Activated CD4-positive, alpha-beta memory T cell treated with anti-CD3 and anti-CD28 coated beads for 36 hours (primary cell): ENCODE measurements at regions of chr4 and their contacts with region 1.

Region 1: GRCh38 chr4:53365486-53366300 is at the start of gene SCFD2:
- DNase-seq: peak; percentile 99
- H3K4me3 Mint-ChIP-seq: peak within 1 kb of the TSS; percentile 96
- H3K27ac Mint-ChIP-seq: peak within 1 kb of the TSS; percentile 94
- H3K4me1 Mint-ChIP-seq: peaks cover 39% of the 10 kb centered on the region
- H3K27me3 Mint-ChIP-seq: peaks cover 5% of the 10 kb centered on the region
- total RNA-seq, gene SCFD2: 18.8 to 19.9 TPM

Region 2: DNA sequence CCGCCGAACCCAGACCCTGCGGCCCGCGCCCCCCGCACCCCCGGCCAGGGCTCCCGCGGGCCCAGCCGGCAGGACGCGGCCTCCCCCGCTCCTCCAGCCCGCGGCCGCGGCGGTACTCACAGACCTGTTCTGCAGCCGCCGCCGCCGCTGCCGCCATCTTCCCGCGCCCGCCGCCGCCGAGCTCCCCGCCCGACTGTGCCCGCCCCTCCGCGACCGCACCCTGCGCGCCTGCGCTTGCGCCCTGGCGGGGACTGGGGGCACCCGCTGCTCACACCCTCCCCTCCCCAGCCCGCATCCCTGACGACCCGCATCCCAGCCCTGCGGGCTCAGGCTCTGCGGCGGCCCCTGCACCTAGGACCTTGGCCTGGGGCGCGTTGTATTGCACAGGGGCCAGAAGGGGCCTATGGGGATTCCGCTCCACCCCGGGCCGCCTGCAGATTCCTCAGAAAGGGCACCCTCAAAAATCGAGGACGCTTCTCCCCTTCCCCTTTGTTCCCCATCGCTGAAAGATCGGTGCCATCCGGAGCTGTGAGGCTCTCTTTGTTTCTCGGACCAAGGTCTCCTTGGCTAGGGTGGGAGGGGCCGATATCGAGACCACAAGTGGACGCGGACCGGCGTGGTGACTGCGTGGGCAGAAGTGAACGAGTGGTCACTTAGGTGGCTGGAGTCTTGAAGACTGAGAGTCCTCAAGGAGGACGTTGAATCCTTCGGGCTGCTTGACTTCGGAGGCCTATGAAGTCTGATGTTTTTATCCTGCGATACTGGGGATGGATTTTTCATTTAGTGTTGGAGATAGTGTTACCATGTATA is 1327.4 kb before region 1 on chr4 and contains the start of gene SGCB:
- CTCF ChIA-PET with region 1: no interaction called
- POLR2A ChIA-PET with region 1: no interaction called
- intact Hi-C with region 1: loop called (anchors 10 kb)
- DNase-seq: peak; percentile 78
- H3K4me3 Mint-ChIP-seq: peak within 1 kb of the TSS; percentile 81
- H3K27ac Mint-ChIP-seq: no peak within 1 kb of the TSS
- H3K4me1 Mint-ChIP-seq: peaks cover 25% of the 10 kb centered on the region
- H3K27me3 Mint-ChIP-seq: peaks cover 11% of the 10 kb centered on the region
- total RNA-seq, gene SGCB: 13.9 to 14.3 TPM

Region 3: GRCh38 chr4:52799813-52800212 is 565.9 kb before region 1 on chr4:
- CTCF ChIA-PET with region 1: no interaction called
- POLR2A ChIA-PET with region 1: no interaction called
- intact Hi-C with region 1: no loop called
- DNase-seq: no peak
- H3K4me3 Mint-ChIP-seq: no peak overlapping the region
- H3K27ac Mint-ChIP-seq: no peak overlapping the region
- H3K4me1 Mint-ChIP-seq: no peaks in the 10 kb centered on the region
- H3K27me3 Mint-ChIP-seq: peaks cover 16% of the 10 kb centered on the region

Region 4: DNA sequence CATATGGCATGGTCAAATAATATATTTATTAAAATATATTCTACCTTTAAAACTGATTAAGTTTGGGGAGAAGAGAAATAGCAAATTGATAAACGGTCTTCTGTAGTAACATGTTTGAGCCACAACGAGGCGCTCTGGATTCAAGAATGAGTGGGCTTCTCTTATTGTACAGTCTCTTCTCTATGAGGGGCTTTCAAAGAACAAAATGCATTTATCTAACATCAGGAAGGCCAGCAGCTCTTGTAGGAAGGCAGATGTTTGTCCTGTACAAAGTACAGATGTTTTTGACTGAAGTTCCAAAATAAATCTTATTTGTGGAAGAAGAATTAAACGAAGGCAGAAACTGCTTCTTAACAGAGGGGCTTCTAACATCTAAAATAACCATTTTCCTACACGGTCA is 350.0 kb before region 1 on chr4:
- CTCF ChIA-PET with region 1: no interaction called
- POLR2A ChIA-PET with region 1: no interaction called
- intact Hi-C with region 1: loop called (anchors 10 kb)
- DNase-seq: peak; percentile 21
- H3K4me3 Mint-ChIP-seq: no peak overlapping the region
- H3K27ac Mint-ChIP-seq: no peak overlapping the region
- H3K4me1 Mint-ChIP-seq: peaks cover 22% of the 10 kb centered on the region
- H3K27me3 Mint-ChIP-seq: no peaks in the 10 kb centered on the region

Region 5: DNA sequence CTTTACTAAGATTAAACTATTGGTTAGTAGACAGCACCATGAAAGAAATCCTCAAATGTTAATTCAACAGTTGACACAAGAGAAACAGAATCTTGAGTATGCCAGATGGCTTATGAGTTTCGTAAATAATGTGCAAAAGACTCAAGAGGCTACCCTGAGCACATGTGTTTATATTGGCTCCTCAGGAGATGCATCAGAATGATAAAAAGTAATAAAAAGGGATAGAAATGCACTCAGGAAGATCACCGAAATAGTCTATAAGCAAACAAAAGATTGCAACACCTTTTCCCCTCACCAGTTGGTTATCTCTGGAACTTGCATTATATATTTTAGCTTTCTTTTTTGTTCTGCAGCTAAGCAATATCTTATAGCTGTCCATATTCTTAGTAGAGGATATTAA is 84.3 kb before region 1 on chr4:
- CTCF ChIA-PET with region 1: no interaction called
- POLR2A ChIA-PET with region 1: no interaction called
- intact Hi-C with region 1: no loop called
- DNase-seq: no peak
- H3K4me3 Mint-ChIP-seq: no peak overlapping the region
- H3K27ac Mint-ChIP-seq: no peak overlapping the region
- H3K4me1 Mint-ChIP-seq: peaks cover 3% of the 10 kb centered on the region
- H3K27me3 Mint-ChIP-seq: no peaks in the 10 kb centered on the region

Region 6: DNA sequence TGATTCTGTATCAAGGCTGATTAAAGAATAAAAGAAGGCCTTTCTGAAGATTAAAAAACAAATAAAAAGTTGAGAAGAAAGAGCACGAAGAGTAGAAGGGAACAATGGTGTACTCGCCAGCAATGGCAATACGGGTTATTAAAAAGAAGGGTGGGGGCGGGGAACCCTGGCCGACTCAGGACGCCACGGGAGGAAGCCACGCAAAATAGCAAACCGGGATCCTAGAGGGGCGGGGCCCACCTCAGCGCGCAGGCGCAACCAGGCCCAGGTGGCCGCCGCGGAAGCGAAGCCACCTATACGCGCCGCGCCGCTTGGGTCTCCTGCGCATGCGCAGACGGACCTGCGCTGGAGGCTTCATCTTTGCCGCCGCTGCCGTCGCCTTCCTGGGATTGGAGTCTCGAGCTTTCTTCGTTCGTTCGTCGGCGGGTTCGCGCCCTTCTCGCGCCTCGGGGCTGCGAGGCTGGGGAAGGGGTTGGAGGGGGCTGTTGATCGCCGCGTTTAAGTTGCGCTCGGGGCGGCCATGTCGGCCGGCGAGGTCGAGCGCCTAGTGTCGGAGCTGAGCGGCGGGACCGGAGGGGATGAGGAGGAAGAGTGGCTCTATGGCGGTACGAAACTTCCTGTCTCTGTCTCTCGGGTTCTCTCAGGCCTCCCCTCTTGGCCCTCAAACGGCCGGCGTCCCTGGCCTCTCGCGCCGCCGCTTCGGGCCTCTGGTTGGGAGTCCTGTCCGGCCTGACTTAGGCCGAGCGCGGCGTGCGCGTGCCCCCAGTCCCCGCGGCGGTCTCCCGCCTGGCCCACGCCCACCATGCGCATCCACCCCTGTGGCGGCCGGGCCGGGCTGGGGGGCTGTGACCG is 11.9 kb after region 1 on chr4 and contains the start of gene FIP1L1:
- CTCF ChIA-PET with region 1: interaction called, 5 read pairs
- POLR2A ChIA-PET with region 1: interaction called, 10 read pairs
- intact Hi-C with region 1: loop called (anchors 1 kb)
- DNase-seq: peak; percentile 97
- H3K4me3 Mint-ChIP-seq: peak within 1 kb of the TSS; percentile 99
- H3K27ac Mint-ChIP-seq: peak within 1 kb of the TSS; percentile 98
- H3K4me1 Mint-ChIP-seq: peaks cover 32% of the 10 kb centered on the region
- H3K27me3 Mint-ChIP-seq: peaks cover 7% of the 10 kb centered on the region
- total RNA-seq, gene FIP1L1: 65.0 to 72.7 TPM